HEK293 (cell line): ENCODE measurements at regions of chr2 and their contacts with region 1.

Region 1: DNA sequence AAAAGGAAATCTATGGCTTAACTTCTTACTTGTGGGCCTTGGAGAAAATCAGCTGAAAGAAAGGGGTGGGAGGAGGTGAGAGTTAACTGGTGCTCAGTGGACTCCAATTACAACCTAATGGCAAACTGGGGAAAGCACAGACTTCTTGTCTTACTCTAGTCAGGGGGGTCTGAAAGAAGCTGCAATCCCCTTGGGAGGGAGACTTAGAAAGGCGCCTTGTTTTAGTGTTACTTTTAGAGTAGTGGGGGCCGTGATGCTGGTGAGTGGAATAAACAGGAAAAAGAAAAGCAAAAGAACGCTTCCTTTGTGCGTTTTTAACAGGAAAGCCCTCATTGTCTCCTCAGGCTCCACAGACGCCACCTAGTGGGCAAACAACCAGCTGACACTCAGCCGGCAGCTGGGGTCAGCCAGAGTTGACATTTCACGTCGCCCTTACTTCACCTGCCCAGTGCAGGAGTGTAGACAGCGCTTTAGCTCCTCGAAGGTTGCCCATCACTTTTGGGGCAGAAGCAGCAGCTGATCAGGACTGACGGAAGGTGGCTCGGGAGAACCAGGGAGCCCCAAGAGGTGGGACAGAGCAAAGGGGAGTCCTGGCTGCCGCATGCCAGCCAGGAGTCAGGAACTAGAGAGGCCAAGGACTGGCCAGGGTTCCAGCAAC is 55.9 kb upstream of the GORASP2 start:
- H3K4me3 ChIP-seq: peak overlapping the region; percentile 3; the same call in 1 of the 2 replicates
- H3K27ac ChIP-seq: no peak overlapping the region
- H3K4me1 ChIP-seq: no peaks in the 10 kb centered on the region
- CTCF ChIP-seq: peak; percentile 94

Region 2: DNA sequence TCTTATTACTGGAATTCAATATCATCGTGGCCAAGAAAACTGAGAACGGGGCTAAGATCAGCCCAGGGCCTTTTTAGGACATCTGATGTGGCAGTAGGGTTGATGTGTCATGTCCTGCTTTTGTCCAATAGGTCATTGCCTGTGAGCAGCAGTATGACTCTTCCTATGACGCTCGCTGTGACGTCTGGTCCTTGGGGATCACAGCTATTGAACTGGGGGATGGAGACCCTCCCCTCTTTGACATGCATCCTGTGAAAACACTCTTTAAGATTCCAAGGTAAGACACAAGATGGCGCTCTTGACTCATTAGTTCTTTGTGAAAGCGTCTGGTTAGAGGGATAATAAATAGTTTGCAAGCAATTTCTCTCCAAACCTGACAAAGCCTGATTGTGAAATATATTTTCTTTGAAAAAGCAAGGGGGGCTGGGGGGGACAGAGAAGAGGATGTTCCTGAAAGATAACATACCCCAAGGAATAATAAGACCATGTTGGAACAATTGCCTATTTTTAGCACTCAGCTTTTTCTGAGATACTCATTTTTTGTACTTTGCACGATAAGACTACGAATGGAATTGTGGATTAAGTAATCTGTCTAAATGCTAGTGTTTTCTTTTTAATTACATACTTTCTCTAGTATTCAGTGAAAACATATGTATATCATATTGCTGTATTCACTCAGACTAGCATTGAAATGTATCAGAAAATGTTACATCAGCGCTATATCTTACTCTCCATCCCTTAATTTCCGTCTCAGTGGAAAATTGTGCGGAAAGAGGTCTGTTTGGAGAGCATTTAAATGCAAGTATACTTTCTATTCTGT is 637.1 kb before region 1 on chr2:
- CTCF ChIA-PET with region 1: interaction called, 11 read pairs
- POLR2A ChIA-PET with region 1: no interaction called
- H3K4me3 ChIP-seq: no peak overlapping the region
- H3K27ac ChIP-seq: no peak overlapping the region
- H3K4me1 ChIP-seq: no peaks in the 10 kb centered on the region
- CTCF ChIP-seq: peak; percentile 54; the same call in 1 of the 2 replicates

Region 3: DNA sequence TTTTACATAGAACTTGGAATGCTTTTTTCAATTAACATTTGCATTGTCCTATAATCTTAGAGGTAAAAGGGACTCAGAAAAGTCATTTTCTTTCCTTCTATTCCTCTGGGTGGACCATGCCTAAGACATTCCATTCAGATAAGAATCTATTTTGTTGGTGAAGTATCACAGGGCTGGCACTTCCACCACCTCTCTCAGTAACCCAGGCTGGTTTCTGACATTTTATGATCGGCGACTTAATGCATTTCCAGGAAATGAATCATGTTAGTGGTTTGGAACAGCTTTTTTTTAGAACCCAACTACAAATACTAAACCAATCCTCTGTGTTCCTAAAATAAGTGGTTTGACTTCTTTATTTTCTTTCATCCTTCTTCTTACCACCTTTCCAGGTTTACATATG is 29.5 kb before region 1 on chr2:
- CTCF ChIA-PET with region 1: interaction called, 18 read pairs
- POLR2A ChIA-PET with region 1: no interaction called
- H3K4me3 ChIP-seq: no peak overlapping the region
- H3K27ac ChIP-seq: no peak overlapping the region
- H3K4me1 ChIP-seq: no peaks in the 10 kb centered on the region
- CTCF ChIP-seq: no peak

Region 4: GRCh38 chr2:170856066-170856465 is 17.1 kb before region 1 on chr2:
- CTCF ChIA-PET with region 1: interaction called, 32 read pairs
- POLR2A ChIA-PET with region 1: no interaction called
- H3K4me3 ChIP-seq: no peak overlapping the region
- H3K27ac ChIP-seq: no peak overlapping the region
- H3K4me1 ChIP-seq: no peaks in the 10 kb centered on the region
- CTCF ChIP-seq: no peak

Region 5: DNA sequence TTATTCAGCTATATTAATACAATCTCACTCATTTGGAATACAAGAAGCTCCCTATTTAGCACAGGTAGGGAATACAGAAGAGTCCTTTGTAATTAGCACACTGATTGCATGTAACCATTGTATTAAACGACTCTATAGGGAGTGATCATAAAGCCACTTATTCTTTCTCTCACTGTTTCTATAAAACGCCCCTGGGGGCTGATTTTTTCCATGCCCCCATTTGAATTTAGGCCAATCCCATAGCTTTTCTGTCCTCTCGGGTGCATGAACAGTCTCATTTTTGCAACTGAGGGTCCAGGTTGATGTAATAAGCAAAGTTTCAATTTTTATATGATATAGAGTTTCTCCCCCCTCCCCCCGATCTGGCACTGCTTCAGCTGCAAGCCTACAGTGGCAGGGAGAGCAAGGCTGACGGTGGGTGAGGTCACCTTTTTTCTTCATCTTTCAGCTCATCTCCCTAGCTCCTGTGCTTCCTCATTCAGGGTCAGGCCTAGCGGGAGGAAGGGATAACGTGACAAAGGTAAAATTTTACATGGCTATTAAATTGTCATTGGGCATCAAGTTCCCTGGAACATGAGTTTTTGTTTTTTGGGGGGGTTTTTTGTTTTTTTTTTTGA is 10.8 kb before region 1 on chr2:
- CTCF ChIA-PET with region 1: interaction called, 32 read pairs
- POLR2A ChIA-PET with region 1: no interaction called
- H3K4me3 ChIP-seq: no peak overlapping the region
- H3K27ac ChIP-seq: no peak overlapping the region
- H3K4me1 ChIP-seq: no peaks in the 10 kb centered on the region
- CTCF ChIP-seq: no peak

Region 6: DNA sequence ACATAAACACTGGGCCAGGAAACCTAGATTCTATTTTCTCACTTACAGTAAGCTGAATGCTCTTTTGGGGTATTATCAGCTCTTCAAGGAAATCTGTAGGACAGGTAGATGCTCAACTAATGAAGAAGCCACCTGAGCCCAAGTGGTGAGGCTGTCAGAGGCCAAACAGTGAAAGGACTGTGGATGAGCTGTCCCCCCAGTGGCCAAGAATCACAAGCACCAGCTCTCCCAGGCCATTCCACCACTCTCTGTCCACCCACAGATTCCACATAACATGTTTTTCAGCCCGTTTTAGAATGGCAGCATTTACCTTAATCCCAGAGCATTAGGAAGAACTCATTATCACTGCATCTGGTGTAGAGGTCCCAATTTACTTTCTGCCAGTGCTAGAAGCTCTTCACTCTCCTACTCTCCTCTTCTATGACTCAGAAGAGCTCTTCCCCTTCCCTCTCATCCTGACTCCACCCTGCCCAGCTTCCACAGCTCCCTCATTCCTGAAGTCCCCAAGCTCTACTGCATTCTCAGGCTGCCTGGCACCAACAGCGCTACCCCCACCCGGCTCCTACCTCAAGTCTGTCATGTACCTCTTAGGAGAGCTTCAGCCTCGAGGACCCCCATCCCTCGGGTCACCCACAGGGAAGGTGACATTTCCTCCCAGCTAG is 12.1 kb after region 1 on chr2:
- CTCF ChIA-PET with region 1: interaction called, 25 read pairs
- POLR2A ChIA-PET with region 1: interaction called, 8 read pairs
- H3K4me3 ChIP-seq: no peak overlapping the region
- H3K27ac ChIP-seq: no peak overlapping the region
- H3K4me1 ChIP-seq: no peaks in the 10 kb centered on the region
- CTCF ChIP-seq: no peak

Region 7: GRCh38 chr2:170905864-170906263 is 32.7 kb after region 1 on chr2:
- CTCF ChIA-PET with region 1: interaction called, 10 read pairs
- POLR2A ChIA-PET with region 1: no interaction called
- H3K4me3 ChIP-seq: no peak overlapping the region
- H3K27ac ChIP-seq: no peak overlapping the region
- H3K4me1 ChIP-seq: no peaks in the 10 kb centered on the region
- CTCF ChIP-seq: no peak

Region 8: GRCh38 chr2:171237751-171238505 is 364.8 kb after region 1 on chr2:
- CTCF ChIA-PET with region 1: no interaction called
- POLR2A ChIA-PET with region 1: no interaction called
- H3K4me3 ChIP-seq: no peak overlapping the region
- H3K27ac ChIP-seq: no peak overlapping the region
- H3K4me1 ChIP-seq: no peaks in the 10 kb centered on the region
- CTCF ChIP-seq: no peak